Common myeloid progenitor, CD34-positive (primary cell): ENCODE measurements at regions of chr18 and their contacts with region 1.

Region 1: GRCh38 chr18:12255626-12256026 is 1.5 kb downstream of the CIDEA start:
- DNase-seq: no peak
- H3K4me3 ChIP-seq: no peak overlapping the region
- H3K27ac ChIP-seq: no peak overlapping the region
- H3K4me1 ChIP-seq: peaks cover 0 to 17% (median 13%) of the 10 kb centered on the region in 4 experiments
- H3K27me3 ChIP-seq: peaks cover 2 to 59% (median 36%) of the 10 kb centered on the region in 5 experiments

Region 2: GRCh38 chr18:12236934-12237832 is 18.4 kb before region 1 on chr18:
- CTCF ChIA-PET with region 1: interaction called, 13 read pairs
- POLR2A ChIA-PET with region 1: no interaction called
- DNase-seq: peak; percentile 57 to 77 (median 76)
- H3K4me3 ChIP-seq: peak overlapping the region in 1 of 7 experiments; percentile 50
- H3K27ac ChIP-seq: no peak overlapping the region
- H3K4me1 ChIP-seq: peaks cover 0 to 14% (median 6%) of the 10 kb centered on the region in 4 experiments
- H3K27me3 ChIP-seq: peaks cover 0 to 2% (median 0%) of the 10 kb centered on the region in 5 experiments

Region 3: GRCh38 chr18:12271376-12272235 is 16.0 kb after region 1 on chr18:
- CTCF ChIA-PET with region 1: interaction called, 10 read pairs
- POLR2A ChIA-PET with region 1: no interaction called
- DNase-seq: peak; percentile 78 to 82 (median 81)
- H3K4me3 ChIP-seq: peak overlapping the region; percentile 20 to 79 (median 68)
- H3K27ac ChIP-seq: no peak overlapping the region
- H3K4me1 ChIP-seq: peaks cover 0 to 6% (median 5%) of the 10 kb centered on the region in 4 experiments
- H3K27me3 ChIP-seq: peaks cover 0 to 3% (median 0%) of the 10 kb centered on the region in 5 experiments